Naive thymus-derived CD4-positive, alpha-beta T cell (primary cell): ENCODE measurements at regions of chr3 and their contacts with region 1.

Region 1: GRCh38 chr3:99945328-99945995 is 127.8 kb downstream of the CMSS1 start:
- DNase-seq: no peak
- ATAC-seq: no peak
- H3K4me3 ChIP-seq: no peak overlapping the region
- H3K4me3 Mint-ChIP-seq: no peak overlapping the region
- H3K27ac ChIP-seq: no peak overlapping the region
- H3K27ac Mint-ChIP-seq: no peak overlapping the region
- H3K4me1 ChIP-seq: no peaks in the 10 kb centered on the region
- H3K4me1 Mint-ChIP-seq: peaks cover 0 to 13% (median 2%) of the 10 kb centered on the region in 7 donors
- H3K27me3 ChIP-seq: no peaks in the 10 kb centered on the region
- H3K27me3 Mint-ChIP-seq: no peaks in the 10 kb centered on the region

Region 2: DNA sequence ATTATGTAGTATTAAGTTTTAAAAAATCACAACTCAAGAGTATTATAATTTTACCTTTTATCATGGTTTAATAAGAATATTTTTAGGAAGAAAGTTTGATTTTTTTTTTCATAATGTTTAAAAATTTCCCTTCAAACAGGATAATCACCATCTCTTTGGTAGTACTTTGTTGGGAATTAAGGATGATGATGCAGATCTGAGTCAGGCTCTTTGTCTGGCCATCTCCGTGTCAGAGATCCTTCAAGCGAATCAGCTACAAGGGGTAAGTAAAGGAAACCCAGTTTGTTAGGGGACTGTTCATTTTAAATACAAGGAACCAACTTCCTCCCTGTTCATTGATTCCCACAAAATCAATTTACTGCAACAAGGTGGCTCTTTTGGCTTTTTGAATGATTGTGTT is 352.3 kb after region 1 on chr3:
- CTCF ChIA-PET with region 1: no interaction called
- POLR2A ChIA-PET with region 1: no interaction called
- intact Hi-C with region 1: no loop called
- DNase-seq: no peak
- ATAC-seq: no peak
- H3K4me3 ChIP-seq: no peak overlapping the region
- H3K4me3 Mint-ChIP-seq: no peak overlapping the region
- H3K27ac ChIP-seq: no peak overlapping the region
- H3K27ac Mint-ChIP-seq: no peak overlapping the region
- H3K4me1 ChIP-seq: no peaks in the 10 kb centered on the region
- H3K4me1 Mint-ChIP-seq: no peaks in the 10 kb centered on the region
- H3K27me3 ChIP-seq: no peaks in the 10 kb centered on the region
- H3K27me3 Mint-ChIP-seq: no peaks in the 10 kb centered on the region

Region 3: DNA sequence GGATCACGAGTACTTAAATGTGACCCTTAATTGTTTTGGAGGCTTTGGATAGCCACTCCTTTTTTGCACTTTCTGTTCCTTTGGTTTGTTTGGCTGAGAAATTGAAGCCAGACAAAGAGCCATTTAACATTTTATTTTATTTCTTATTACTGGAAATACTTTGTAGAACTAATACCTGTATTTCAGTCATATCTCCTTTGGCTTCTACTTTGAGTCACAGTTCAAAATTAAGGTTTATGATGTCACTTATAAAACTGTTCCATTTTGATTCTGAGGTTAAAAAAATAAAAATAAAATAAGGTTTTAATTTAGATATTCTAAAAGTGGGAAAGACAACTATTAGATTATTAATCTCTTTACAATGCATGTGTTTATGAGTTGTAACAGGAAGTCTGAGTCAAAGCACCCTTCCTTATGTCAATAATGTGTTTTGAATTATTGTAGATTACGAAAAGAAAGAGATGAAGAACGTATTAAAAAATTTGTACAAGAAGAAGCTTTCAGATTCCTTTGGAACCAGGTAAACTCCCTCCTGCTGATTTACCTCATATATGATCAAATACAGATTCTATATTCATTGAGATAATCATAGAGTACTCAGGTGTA is 1816.7 kb after region 1 on chr3:
- CTCF ChIA-PET with region 1: no interaction called
- POLR2A ChIA-PET with region 1: no interaction called
- intact Hi-C with region 1: loop called in 1 of 2 experiments (anchors 10 kb)
- DNase-seq: no peak
- ATAC-seq: no peak
- H3K4me3 ChIP-seq: no peak overlapping the region
- H3K4me3 Mint-ChIP-seq: no peak overlapping the region
- H3K27ac ChIP-seq: no peak overlapping the region
- H3K27ac Mint-ChIP-seq: no peak overlapping the region
- H3K4me1 ChIP-seq: peaks cover 0 to 4% of the 10 kb centered on the region in 2 donors
- H3K4me1 Mint-ChIP-seq: peaks cover 9 to 23% (median 14%) of the 10 kb centered on the region in 7 donors
- H3K27me3 ChIP-seq: no peaks in the 10 kb centered on the region
- H3K27me3 Mint-ChIP-seq: no peaks in the 10 kb centered on the region